ENCODE measurements at regions of chr12 and their contacts with region 1.

Region 1: GRCh38 chr12:94269316-94269999 is 121.1 kb downstream of the PLXNC1 start:
- DNase-seq: no peak
- ATAC-seq: peak; percentile 66
- H3K4me3 ChIP-seq: no peak overlapping the region
- H3K27ac ChIP-seq: 0 out of 2 replicates have a peak overlapping the region, but pooled peaks have one; percentile 15
- H3K4me1 ChIP-seq: peaks cover 61% of the 10 kb centered on the region
- H3K27me3 ChIP-seq: no peaks in the 10 kb centered on the region
- CTCF ChIP-seq: no peak
- EP300 ChIP-seq: no peak
- POLR2A ChIP-seq: no peak
- RAD21 ChIP-seq: no peak

Region 2: GRCh38 chr12:93848523-93849101 is 420.8 kb before region 1 on chr12:
- CTCF ChIA-PET with region 1: no interaction called
- POLR2A ChIA-PET with region 1: no interaction called
- RAD21 ChIA-PET with region 1: no interaction called
- SMC1A ChIA-PET with region 1: no interaction called
- in situ Hi-C with region 1: no loop called
- intact Hi-C with region 1: no loop called
- DNase-seq: no peak
- ATAC-seq: peak; percentile 28
- H3K4me3 ChIP-seq: no peak overlapping the region
- H3K27ac ChIP-seq: 0 out of 2 replicates have a peak overlapping the region, but pooled peaks have one; percentile 17
- H3K4me1 ChIP-seq: peaks cover 21% of the 10 kb centered on the region
- H3K27me3 ChIP-seq: no peaks in the 10 kb centered on the region
- CTCF ChIP-seq: no peak
- EP300 ChIP-seq: no peak
- POLR2A ChIP-seq: no peak
- RAD21 ChIP-seq: no peak

Region 3: GRCh38 chr12:94186278-94187241 is 82.9 kb before region 1 on chr12:
- CTCF ChIA-PET with region 1: no interaction called
- POLR2A ChIA-PET with region 1: no interaction called
- RAD21 ChIA-PET with region 1: no interaction called
- SMC1A ChIA-PET with region 1: no interaction called
- in situ Hi-C with region 1: no loop called
- intact Hi-C with region 1: no loop called
- DNase-seq: no peak
- ATAC-seq: no peak
- H3K4me3 ChIP-seq: no peak overlapping the region
- H3K27ac ChIP-seq: no peak overlapping the region
- H3K4me1 ChIP-seq: peaks cover 11% of the 10 kb centered on the region
- H3K27me3 ChIP-seq: no peaks in the 10 kb centered on the region
- CTCF ChIP-seq: no peak
- EP300 ChIP-seq: no peak
- POLR2A ChIP-seq: no peak
- RAD21 ChIP-seq: no peak

Region 4: DNA sequence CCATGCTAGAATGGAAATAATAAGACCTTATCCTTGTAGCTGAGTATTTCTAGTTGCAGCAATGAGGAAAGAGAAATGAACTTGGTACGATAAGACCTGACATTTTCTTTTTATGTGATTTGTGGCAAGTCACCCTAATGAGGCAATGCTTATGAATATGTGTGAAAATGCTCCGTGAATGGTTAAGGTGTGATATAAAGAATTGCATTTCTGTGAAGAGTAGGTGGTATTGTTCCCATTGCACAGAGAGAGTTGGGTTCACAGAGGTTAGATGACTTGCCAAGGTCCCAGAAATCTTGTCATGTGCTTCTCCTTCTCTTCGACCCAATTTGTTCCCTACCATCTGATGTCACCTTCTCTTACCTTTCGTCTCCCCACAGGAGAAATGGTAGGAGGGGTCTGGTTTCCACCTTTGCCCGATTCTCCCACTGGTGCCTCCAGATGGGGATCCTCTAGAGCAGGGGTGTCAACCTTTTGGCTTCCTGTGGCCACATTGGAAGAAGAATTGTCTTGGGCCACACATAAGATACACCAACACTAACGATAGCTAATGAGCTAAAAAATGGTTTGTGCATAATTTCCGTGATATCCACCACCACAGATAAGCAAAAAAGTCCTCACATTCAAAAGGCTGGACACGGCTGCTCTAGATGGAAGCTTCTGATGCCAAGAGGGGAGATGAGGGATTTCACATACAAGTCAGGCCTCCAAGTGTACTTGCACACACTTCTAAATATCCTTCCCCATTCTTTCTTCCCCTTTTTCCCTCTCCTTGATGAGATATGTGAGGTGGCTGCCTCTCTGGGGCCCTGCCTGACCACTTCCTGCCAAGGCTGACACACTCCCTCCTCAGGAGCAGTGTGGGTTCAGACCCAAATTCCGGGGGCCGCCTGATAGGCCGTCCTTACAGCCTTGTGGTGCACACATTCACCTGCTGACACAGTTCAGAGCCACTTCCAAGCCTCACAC is 25.0 kb before region 1 on chr12:
- CTCF ChIA-PET with region 1: no interaction called
- POLR2A ChIA-PET with region 1: interaction called, 3 read pairs
- RAD21 ChIA-PET with region 1: interaction called, 18 read pairs
- SMC1A ChIA-PET with region 1: interaction called, 17 read pairs
- in situ Hi-C with region 1: no loop called
- intact Hi-C with region 1: no loop called
- DNase-seq: no peak
- ATAC-seq: peak; percentile 86
- H3K4me3 ChIP-seq: no peak overlapping the region
- H3K27ac ChIP-seq: peak overlapping the region; percentile 41
- H3K4me1 ChIP-seq: peaks cover 37% of the 10 kb centered on the region
- H3K27me3 ChIP-seq: no peaks in the 10 kb centered on the region
- CTCF ChIP-seq: no peak
- EP300 ChIP-seq: peak in 1 of 2 experiments; percentile 63; a peak in 1 of 4 replicates
- POLR2A ChIP-seq: no peak; the same call in 1 of the 2 replicates
- RAD21 ChIP-seq: no peak

Region 5: GRCh38 chr12:94305130-94305957 is 35.9 kb after region 1 on chr12:
- CTCF ChIA-PET with region 1: interaction called, 9 read pairs
- POLR2A ChIA-PET with region 1: interaction called, 9 read pairs
- RAD21 ChIA-PET with region 1: interaction called, 3 read pairs
- SMC1A ChIA-PET with region 1: interaction called, 15 read pairs
- in situ Hi-C with region 1: no loop called
- intact Hi-C with region 1: loop called (anchors 2 kb)
- DNase-seq: peak; percentile 67
- ATAC-seq: peak; percentile 71
- H3K4me3 ChIP-seq: no peak overlapping the region
- H3K27ac ChIP-seq: peak overlapping the region; percentile 42
- H3K4me1 ChIP-seq: peaks cover 35% of the 10 kb centered on the region
- H3K27me3 ChIP-seq: no peaks in the 10 kb centered on the region
- CTCF ChIP-seq: no peak
- EP300 ChIP-seq: peak; percentile 73 to 76; a peak in 3 of 4 replicates
- POLR2A ChIP-seq: no peak
- RAD21 ChIP-seq: no peak